Vagina (tissue), 2 donors: ENCODE measurements at regions of chr5 and their contacts with region 1.

Region 1: GRCh38 chr5:134904630-134905245 is at the start of gene PCBD2:
- DNase-seq: no peak
- H3K4me3 ChIP-seq: peak within 1 kb of the TSS; percentile 56 to 67
- H3K27ac ChIP-seq: peak within 1 kb of the TSS; percentile 97
- H3K4me1 ChIP-seq: peaks cover 4% of the 10 kb centered on the region
- H3K27me3 ChIP-seq: no peaks in the 10 kb centered on the region
- CTCF ChIP-seq: peak; percentile 34 to 96 (median 86)
- POLR2A ChIP-seq: peak in 1 of 2 donors; percentile 24
- total RNA-seq, gene PCBD2: 6.1 TPM

Region 2: GRCh38 chr5:133779828-133780475 is 1124.8 kb before region 1 on chr5:
- intact Hi-C with region 1: no loop called
- DNase-seq: no peak
- H3K4me3 ChIP-seq: no peak overlapping the region
- H3K27ac ChIP-seq: no peak overlapping the region
- H3K4me1 ChIP-seq: no peaks in the 10 kb centered on the region
- H3K27me3 ChIP-seq: no peaks in the 10 kb centered on the region
- CTCF ChIP-seq: no peak
- POLR2A ChIP-seq: no peak

Region 3: DNA sequence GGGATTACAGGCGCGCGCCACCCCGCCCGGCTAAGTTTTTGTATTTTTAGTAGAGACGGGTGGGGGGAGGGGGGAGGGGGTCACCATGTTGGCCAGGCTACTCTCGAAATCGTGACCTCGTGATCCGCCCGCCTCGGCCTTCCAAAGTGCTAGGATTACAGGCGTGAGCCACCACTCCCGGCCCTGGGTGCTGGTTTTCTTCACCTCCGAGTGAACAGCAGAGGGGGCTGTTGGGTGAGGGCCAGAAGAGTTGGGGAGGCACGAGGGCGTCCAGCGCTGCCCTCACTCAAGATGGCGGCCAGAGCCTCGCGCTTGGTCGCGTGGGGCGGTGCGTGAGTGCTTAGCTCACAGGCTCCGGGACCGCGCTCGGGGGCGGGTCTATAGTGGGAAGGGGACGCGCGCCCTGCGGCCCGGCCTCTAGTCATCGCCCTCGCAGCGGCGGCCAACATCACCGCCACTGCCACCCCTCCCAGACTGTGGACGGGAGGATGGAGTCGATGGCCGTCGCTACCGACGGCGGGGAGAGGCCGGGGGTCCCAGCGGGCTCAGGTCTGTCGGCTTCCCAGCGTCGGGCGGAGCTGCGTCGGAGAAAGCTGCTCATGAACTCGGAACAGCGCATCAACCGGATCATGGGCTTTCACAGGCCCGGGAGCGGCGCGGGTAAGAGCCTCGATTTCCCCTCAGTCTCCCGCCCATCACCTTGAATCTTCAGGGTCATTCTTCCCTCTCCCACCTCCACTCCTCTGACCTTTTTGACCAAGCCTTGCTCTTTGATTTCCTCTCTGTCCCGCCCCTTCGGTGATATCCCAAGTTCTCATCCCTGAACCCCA is 166.4 kb before region 1 on chr5 and contains the start of gene CAMLG:
- intact Hi-C with region 1: loop called (anchors 2 kb)
- DNase-seq: peak in 1 of 2 donors; percentile 97
- H3K4me3 ChIP-seq: peak within 1 kb of the TSS; percentile 83 to 85
- H3K27ac ChIP-seq: peak within 1 kb of the TSS; percentile 95
- H3K4me1 ChIP-seq: peaks cover 26% of the 10 kb centered on the region
- H3K27me3 ChIP-seq: no peaks in the 10 kb centered on the region
- CTCF ChIP-seq: peak in 1 of 3 experiments; percentile 60
- POLR2A ChIP-seq: peak in 1 of 2 donors; percentile 83
- total RNA-seq, gene CAMLG: 49.1 TPM

Region 4: GRCh38 chr5:134845852-134846640 is 58.7 kb before region 1 on chr5 and contains the start of gene C5orf24:
- intact Hi-C with region 1: loop called (anchors 10 kb)
- DNase-seq: peak in 1 of 2 donors; percentile 93
- H3K4me3 ChIP-seq: peak within 1 kb of the TSS; percentile 69 to 89
- H3K27ac ChIP-seq: peak within 1 kb of the TSS; percentile 94
- H3K4me1 ChIP-seq: peaks cover 49% of the 10 kb centered on the region
- H3K27me3 ChIP-seq: no peaks in the 10 kb centered on the region
- CTCF ChIP-seq: no peak
- POLR2A ChIP-seq: peak in 1 of 2 donors; percentile 92
- total RNA-seq, gene C5orf24: 38.3 TPM

Region 5: GRCh38 chr5:135191084-135191826 is 286.5 kb after region 1 on chr5:
- intact Hi-C with region 1: no loop called
- DNase-seq: peak; percentile 86 to 96
- H3K4me3 ChIP-seq: peak overlapping the region; percentile 36 to 45
- H3K27ac ChIP-seq: peak overlapping the region; percentile 61
- H3K4me1 ChIP-seq: peaks cover 50% of the 10 kb centered on the region
- H3K27me3 ChIP-seq: no peaks in the 10 kb centered on the region
- CTCF ChIP-seq: peak; percentile 48 to 70 (median 68)
- POLR2A ChIP-seq: no peak